KBM-7 (cell line): ENCODE measurements at regions of chr6 and their contacts with region 1.

Region 1: DNA sequence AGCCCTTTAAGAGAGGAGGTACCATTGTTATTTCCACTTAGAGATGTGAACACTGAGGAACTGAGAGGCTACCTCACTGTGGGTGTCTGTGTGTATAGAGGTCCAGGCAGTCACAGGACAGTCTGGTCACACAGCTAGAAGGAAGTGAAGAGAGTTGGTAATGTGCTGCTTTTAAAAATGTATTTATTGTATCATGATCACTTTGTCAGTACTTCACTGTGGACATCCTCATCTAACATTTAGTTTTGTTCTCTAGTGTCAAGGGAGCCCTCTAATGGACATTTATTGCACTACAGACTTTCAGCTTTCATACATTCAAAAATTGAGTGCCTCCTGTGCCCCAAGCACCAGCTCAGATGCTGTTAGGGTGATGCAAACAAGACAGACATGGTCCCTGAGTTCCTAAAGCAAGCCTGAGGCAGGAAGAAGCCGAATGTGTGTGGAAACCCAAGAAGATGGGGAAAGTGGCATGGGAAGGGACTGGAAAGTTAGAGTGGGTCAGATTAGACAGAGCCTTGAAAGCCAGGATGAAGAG is 123.0 kb downstream of the SLC16A10 start:
- DNase-seq: peak; percentile 86

Region 2: GRCh38 chr6:111057074-111057752 is 153.0 kb before region 1 on chr6:
- in situ Hi-C with region 1: loop called (anchors 25 kb)
- DNase-seq: peak; percentile 76